HepG2 (cell line): ENCODE measurements at regions of chr13 and their contacts with region 1.

Region 1: DNA sequence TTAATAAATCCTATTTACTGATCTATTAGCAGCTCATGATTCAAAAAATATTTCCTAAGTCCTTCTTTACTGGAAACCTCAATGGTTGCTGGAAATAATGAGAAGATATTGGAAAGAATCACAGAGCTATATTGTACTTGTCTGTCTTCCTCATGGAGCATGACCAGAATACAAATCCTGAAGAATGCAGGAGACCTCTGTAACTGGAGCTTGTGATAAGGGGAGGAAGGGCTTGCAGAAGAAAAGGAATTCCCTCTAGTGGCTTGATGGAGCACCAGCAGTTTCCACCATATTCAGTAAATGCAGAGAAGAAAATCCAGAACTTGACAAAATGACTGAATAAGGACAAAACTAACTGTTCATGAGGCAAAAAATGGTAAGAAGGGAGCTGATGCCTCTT is 1333.1 kb downstream of the EFNB2 start:
- DNase-seq: no peak
- ATAC-seq: 0 out of 3 replicates have a peak, but pooled peaks have one; percentile 38
- H3K4me3 ChIP-seq: no peak overlapping the region
- H3K27ac ChIP-seq: no peak overlapping the region
- H3K4me1 ChIP-seq: no peaks in the 10 kb centered on the region
- H3K27me3 ChIP-seq: no peaks in the 10 kb centered on the region; a peak in 1 of 5 replicates
- CTCF ChIP-seq: no peak
- EP300 ChIP-seq: no peak
- POLR2A ChIP-seq: no peak
- RAD21 ChIP-seq: no peak

Region 2: DNA sequence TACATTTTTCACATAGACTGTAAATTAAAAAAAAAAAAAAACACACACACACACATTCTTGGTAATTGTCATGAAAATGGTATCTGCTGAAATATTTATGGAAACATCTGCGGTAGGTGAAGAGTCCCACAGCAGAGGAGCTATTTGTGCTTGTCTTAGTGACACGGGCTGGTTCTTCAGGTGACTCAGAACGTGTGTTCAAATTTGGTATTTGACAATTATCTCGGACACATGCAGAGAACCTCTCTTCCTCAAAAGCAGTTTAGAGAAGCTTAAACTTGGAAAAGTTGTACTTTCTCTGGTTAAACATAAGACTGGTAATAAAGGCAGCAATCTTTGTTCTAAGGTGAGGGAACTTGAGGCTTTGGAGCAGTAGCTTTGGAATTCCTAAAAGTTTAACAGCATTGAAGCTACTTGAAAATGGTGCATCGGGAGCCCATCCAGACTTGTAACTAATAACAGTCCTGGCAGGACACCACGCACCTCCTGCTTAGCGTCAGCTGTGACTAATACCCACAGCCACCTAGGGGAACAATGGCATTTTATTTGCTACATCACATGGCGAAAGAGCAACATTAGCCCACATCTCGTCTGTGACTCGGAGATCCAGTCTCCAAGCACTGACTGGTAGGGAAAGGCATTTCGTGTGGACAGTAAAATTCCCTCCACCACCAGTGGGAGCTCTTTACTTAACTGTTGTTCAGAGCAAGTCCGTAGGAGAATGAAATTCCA is 631.0 kb before region 1 on chr13:
- CTCF ChIA-PET with region 1: no interaction called
- POLR2A ChIA-PET with region 1: no interaction called
- in situ Hi-C with region 1: no loop called
- intact Hi-C with region 1: loop called (anchors 10 kb)
- DNase-seq: peak; percentile 16
- ATAC-seq: peak; percentile 89
- H3K4me3 ChIP-seq: no peak overlapping the region
- H3K27ac ChIP-seq: no peak overlapping the region
- H3K4me1 ChIP-seq: no peaks in the 10 kb centered on the region
- H3K27me3 ChIP-seq: no peaks in the 10 kb centered on the region
- CTCF ChIP-seq: peak; percentile 59
- EP300 ChIP-seq: no peak
- POLR2A ChIP-seq: no peak
- RAD21 ChIP-seq: no peak

Region 3: GRCh38 chr13:105627270-105627669 is 424.9 kb after region 1 on chr13:
- CTCF ChIA-PET with region 1: no interaction called
- POLR2A ChIA-PET with region 1: no interaction called
- in situ Hi-C with region 1: no loop called
- intact Hi-C with region 1: no loop called
- DNase-seq: no peak
- ATAC-seq: no peak
- H3K4me3 ChIP-seq: no peak overlapping the region
- H3K27ac ChIP-seq: no peak overlapping the region
- H3K4me1 ChIP-seq: no peaks in the 10 kb centered on the region
- H3K27me3 ChIP-seq: no peaks in the 10 kb centered on the region; a peak in 1 of 5 replicates
- CTCF ChIP-seq: no peak
- EP300 ChIP-seq: no peak
- POLR2A ChIP-seq: no peak
- RAD21 ChIP-seq: no peak